BJ (cell line): ENCODE measurements at regions of chr4 and their contacts with region 1.

Region 1: DNA sequence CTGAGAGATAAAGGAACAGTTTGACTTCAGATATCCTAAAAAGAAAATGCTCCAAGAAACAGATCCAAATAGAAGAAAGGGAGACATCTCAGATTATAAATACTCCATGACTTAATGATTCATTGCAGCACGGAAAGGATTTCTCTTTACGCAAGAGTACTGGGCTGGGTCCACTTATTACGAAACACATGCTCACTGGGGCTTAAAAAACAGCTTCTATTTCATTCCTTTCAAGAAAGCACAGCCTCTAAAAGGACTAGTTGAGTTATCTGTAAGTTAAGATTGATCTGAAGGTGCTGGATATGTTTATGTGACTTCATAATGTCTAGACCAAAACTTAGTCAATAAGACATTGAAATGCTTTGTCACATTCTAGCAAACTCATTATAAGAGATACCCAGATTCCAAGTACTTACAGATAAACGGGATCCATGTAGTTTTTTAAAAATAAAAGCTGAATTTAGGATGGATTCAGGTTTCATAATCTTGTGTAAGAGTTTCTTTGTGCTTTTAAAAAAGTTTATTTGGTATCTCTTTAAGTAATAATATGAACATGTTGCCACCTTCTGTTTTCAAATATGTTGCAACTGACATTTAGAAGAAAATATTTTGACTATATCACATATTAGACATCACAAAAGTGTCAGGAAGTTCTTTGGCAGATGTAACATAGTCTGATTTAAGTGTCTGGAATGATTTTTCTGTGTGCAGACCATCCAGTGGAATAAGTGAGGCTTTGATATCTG is 109.5 kb upstream of the MYOZ2 start:
- DNase-seq: peak; percentile 90
- H3K4me3 ChIP-seq: no peak overlapping the region
- H3K27me3 ChIP-seq: no peaks in the 10 kb centered on the region
- CTCF ChIP-seq: no peak

Region 2: DNA sequence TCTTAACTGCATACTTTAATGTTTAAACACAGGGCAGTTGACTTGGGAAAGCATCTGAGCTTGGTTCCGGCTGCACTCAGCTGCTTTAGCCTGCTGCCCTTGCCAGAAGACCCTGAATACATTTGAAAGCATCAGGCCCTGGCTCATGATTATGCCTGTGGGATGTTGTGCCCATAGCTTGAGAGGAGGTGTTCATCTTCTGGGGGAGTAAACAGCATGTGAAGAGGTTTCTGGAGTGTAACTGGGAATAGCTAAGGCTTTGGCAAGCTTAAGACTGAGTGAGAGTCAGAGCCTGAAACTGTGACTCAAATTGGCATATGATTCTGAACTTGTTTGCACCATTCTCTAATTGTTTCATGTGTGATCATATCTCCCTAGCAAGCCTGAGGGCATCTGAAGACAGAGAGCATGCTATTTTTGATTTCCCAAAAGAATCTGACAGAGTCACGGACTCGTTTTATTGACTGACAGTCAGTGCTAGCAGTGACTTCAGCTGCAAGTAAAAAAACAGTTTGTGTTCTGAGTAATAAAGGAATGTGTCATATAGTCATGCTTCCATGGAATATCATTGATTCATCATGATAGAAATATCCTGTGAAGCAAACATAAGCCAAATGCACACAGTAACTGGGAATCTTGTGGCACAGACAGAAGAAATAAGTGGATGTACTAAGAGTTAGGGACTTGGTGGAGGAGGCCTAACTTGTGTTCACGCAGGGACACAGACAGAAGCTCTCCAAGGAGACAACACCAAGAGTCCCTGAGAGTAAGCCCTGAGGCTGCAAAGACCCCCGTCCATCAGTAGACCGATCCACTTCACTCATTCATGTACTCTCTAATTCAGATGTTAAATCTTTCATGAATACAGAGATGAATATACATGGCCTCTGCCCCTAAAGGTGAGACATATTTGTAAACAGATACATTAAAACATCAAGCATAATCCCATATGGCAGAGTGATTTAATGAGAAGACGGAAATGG is 36.7 kb before region 1 on chr4:
- CTCF ChIA-PET with region 1: interaction called, 4 read pairs
- POLR2A ChIA-PET with region 1: interaction called, 20 read pairs
- DNase-seq: peak; percentile 100
- H3K4me3 ChIP-seq: no peak overlapping the region
- H3K27me3 ChIP-seq: no peaks in the 10 kb centered on the region
- CTCF ChIP-seq: no peak

Region 3: DNA sequence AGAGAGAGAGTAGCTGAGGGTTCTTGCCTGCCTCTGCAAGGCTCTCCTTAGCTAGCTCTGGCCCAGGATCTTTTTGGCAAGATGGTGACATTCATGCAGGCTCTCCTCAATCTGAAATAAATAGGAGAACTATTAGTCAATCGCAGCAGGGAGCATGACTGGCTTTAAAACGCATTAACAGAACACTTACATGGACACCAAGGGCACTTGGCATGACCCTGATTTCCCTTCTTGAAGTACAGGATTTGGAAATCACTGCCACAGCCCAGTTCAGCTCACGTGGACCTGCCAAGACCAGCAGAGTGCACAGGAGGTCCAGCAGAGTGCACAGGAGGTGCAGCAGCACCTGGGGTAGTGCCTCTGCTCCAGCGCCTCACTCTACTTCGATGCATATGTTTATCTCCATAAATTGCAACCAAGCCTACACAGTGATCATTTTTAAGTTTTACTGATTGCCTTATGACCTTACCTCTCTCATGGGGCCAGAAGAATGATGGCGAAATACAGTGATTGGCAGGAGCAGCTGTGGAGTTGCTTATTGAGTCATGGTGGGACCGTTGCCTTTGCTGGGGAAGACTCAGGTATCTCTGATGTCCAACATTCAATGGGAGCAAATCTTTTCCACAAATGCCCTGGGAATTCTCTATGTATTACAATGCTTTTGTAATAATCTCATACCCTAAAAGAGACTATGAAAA is 15.0 kb before region 1 on chr4:
- CTCF ChIA-PET with region 1: interaction called, 3 read pairs
- POLR2A ChIA-PET with region 1: interaction called, 17 read pairs
- DNase-seq: no peak
- H3K4me3 ChIP-seq: no peak overlapping the region
- H3K27me3 ChIP-seq: no peaks in the 10 kb centered on the region
- CTCF ChIP-seq: no peak

Region 4: DNA sequence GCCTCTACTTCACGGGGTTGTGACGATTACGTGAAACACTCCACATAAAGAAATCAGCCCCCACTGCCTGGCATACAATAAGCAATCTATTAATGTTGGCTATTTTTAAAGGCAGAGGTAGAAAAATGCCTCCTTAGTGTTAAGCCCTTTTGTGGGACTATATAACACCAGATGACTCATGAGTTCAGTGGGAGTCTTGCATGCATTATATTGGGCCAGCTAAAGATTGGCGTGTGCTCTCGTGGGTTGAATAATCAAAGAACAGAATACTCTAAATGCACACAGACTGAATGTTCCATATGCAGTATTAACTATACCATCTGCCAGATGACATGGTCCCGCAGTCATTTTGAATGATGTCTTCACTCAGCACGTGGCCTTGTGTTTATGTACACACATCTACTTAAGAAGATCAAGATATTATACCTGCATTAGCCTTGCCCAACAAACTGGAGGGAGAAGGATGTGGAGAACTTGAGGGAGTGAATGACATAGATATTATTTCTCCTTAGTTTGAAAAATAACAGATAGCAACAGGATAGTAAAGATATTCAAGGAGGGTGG is 24.5 kb after region 1 on chr4:
- CTCF ChIA-PET with region 1: no interaction called
- POLR2A ChIA-PET with region 1: no interaction called
- DNase-seq: no peak
- H3K4me3 ChIP-seq: no peak overlapping the region
- H3K27me3 ChIP-seq: no peaks in the 10 kb centered on the region
- CTCF ChIP-seq: no peak